PC-9 (cell line): ENCODE measurements at regions of chr3 and their contacts with region 1.

Region 1: GRCh38 chr3:186754006-186754405 is 29.4 kb upstream of the EIF4A2 start:
- DNase-seq: no peak
- H3K4me3 ChIP-seq: peak overlapping the region; percentile 46; the same call in 1 of the 2 replicates
- H3K27ac ChIP-seq: peak overlapping the region; percentile 91
- H3K4me1 ChIP-seq: peaks cover 31% of the 10 kb centered on the region
- H3K27me3 ChIP-seq: no peaks in the 10 kb centered on the region
- CTCF ChIP-seq: no peak

Region 2: GRCh38 chr3:186259612-186260383 is 494.2 kb before region 1 on chr3:
- CTCF ChIA-PET with region 1: no interaction called
- POLR2A ChIA-PET with region 1: no interaction called
- intact Hi-C with region 1: loop called (anchors 5 kb)
- DNase-seq: peak; percentile 73 to 81
- H3K4me3 ChIP-seq: peak overlapping the region; percentile 23; the same call in 1 of the 2 replicates
- H3K27ac ChIP-seq: no peak overlapping the region
- H3K4me1 ChIP-seq: peaks cover 6% of the 10 kb centered on the region
- H3K27me3 ChIP-seq: peaks cover 4% of the 10 kb centered on the region; the same call in 1 of the 2 replicates
- CTCF ChIP-seq: peak; percentile 93

Region 3: GRCh38 chr3:186452517-186452916 is 301.5 kb before region 1 on chr3:
- CTCF ChIA-PET with region 1: no interaction called
- POLR2A ChIA-PET with region 1: no interaction called
- intact Hi-C with region 1: no loop called
- DNase-seq: peak; percentile 48 to 73
- H3K4me3 ChIP-seq: no peak overlapping the region
- H3K27ac ChIP-seq: no peak overlapping the region
- H3K4me1 ChIP-seq: peaks cover 3% of the 10 kb centered on the region; the same call in 1 of the 2 replicates
- H3K27me3 ChIP-seq: peaks cover 87% of the 10 kb centered on the region
- CTCF ChIP-seq: no peak

Region 4: GRCh38 chr3:186700267-186700666 is 53.7 kb before region 1 on chr3:
- CTCF ChIA-PET with region 1: no interaction called
- POLR2A ChIA-PET with region 1: no interaction called
- intact Hi-C with region 1: no loop called
- DNase-seq: no peak
- H3K4me3 ChIP-seq: no peak overlapping the region
- H3K27ac ChIP-seq: no peak overlapping the region
- H3K4me1 ChIP-seq: 0 out of 2 replicates have a peak, but pooled peaks cover 5% of the 10 kb centered on the region
- H3K27me3 ChIP-seq: no peaks in the 10 kb centered on the region
- CTCF ChIP-seq: no peak

Region 5: GRCh38 chr3:186722456-186722855 is 31.6 kb before region 1 on chr3:
- CTCF ChIA-PET with region 1: interaction called, 20 read pairs
- POLR2A ChIA-PET with region 1: no interaction called
- intact Hi-C with region 1: no loop called
- DNase-seq: no peak
- H3K4me3 ChIP-seq: no peak overlapping the region
- H3K27ac ChIP-seq: no peak overlapping the region
- H3K4me1 ChIP-seq: no peaks in the 10 kb centered on the region
- H3K27me3 ChIP-seq: no peaks in the 10 kb centered on the region
- CTCF ChIP-seq: no peak; the same call in 1 of the 2 replicates